ENCODE measurements at regions of chr6 and their contacts with region 1.

Region 1: DNA sequence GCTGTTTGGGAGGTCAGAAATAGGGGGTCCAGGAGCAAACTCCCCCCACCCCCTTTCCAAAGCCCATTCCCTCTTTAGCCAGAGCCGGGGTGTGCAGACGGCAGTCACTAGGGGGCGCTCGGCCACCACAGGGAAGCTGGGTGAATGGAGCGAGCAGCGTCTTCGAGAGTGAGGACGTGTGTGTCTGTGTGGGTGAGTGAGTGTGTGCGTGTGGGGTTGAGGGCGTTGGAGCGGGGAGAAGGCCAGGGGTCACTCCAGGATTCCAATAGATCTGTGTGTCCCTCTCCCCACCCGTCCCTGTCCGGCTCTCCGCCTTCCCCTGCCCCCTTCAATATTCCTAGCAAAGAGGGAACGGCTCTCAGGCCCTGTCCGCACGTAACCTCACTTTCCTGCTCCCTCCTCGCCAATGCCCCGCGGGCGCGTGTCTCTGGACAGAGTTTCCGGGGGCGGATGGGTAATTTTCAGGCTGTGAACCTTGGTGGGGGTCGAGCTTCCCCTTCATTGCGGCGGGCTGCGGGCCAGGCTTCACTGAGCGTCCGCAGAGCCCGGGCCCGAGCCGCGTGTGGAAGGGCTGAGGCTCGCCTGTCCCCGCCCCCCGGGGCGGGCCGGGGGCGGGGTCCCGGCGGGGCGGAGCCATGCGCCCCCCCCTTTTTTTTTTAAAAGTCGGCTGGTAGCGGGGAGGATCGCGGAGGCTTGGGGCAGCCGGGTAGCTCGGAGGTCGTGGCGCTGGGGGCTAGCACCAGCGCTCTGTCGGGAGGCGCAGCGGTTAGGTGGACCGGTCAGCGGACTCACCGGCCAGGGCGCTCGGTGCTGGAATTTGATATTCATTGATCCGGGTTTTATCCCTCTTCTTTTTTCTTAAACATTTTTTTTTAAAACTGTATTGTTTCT is at the start of gene VEGFA:
- DNase-seq: peak; percentile 98
- H3K4me3 ChIP-seq: peak within 1 kb of the TSS; percentile 94 to 95
- H3K27ac ChIP-seq: peak within 1 kb of the TSS; percentile 85 to 94
- H3K4me1 ChIP-seq: peaks cover 16 to 50% of the 10 kb centered on the region in 2 experiments
- H3K27me3 ChIP-seq: no peaks in the 10 kb centered on the region
- CTCF ChIP-seq: peak; percentile 99
- EP300 ChIP-seq: no peak; a peak in 1 of 4 replicates
- RAD21 ChIP-seq: peak; percentile 93
- polyA plus RNA-seq, gene VEGFA: 81.0 and 130 TPM in 2 replicates

Region 2: DNA sequence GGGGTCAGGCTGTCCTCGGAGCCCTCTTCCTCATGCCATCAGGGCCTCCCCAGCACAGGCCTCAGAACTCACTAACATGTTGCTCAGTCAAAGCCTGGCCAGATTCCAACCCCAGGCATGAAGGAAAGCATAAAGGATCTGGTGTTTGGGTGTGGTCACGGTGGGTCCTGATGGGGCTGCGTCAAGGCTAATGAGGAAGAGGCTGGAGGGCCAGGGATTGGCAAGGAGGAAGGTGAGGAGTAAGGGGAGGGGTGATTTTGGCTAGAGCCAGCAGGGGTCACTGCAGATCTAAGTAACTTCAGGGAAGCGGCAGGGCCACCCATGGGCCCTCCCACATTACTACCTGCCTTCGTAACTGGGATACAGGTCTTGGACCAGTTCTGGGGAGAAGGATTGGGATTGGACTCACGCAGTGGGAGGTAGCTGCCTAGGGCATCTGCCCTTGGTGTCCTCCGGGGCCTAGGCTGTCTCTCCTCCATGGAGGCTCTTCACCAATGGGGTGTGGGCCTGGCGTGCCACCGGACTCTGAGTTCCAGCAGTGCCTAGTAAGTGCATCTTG is 46.0 kb before region 1 on chr6:
- CTCF ChIA-PET with region 1: interaction called, 47 read pairs
- POLR2A ChIA-PET with region 1: interaction called, 3 read pairs
- DNase-seq: peak; percentile 77
- H3K4me3 ChIP-seq: no peak overlapping the region; a peak in 1 of 4 replicates
- H3K27ac ChIP-seq: no peak overlapping the region
- H3K4me1 ChIP-seq: peaks cover 0 to 13% of the 10 kb centered on the region in 2 experiments; a peak in 2 of 4 replicates
- H3K27me3 ChIP-seq: no peaks in the 10 kb centered on the region
- CTCF ChIP-seq: peak; percentile 62
- EP300 ChIP-seq: no peak
- RAD21 ChIP-seq: peak; percentile 83

Region 3: GRCh38 chr6:43781941-43782704 is 12.4 kb after region 1 on chr6:
- CTCF ChIA-PET with region 1: interaction called, 35 read pairs
- POLR2A ChIA-PET with region 1: interaction called, 6 read pairs
- DNase-seq: no peak
- H3K4me3 ChIP-seq: no peak overlapping the region
- H3K27ac ChIP-seq: no peak overlapping the region
- H3K4me1 ChIP-seq: peaks cover 0 to 53% of the 10 kb centered on the region in 2 experiments; a peak in 1 of 4 replicates
- H3K27me3 ChIP-seq: no peaks in the 10 kb centered on the region
- CTCF ChIP-seq: no peak
- EP300 ChIP-seq: no peak
- RAD21 ChIP-seq: no peak

Region 4: DNA sequence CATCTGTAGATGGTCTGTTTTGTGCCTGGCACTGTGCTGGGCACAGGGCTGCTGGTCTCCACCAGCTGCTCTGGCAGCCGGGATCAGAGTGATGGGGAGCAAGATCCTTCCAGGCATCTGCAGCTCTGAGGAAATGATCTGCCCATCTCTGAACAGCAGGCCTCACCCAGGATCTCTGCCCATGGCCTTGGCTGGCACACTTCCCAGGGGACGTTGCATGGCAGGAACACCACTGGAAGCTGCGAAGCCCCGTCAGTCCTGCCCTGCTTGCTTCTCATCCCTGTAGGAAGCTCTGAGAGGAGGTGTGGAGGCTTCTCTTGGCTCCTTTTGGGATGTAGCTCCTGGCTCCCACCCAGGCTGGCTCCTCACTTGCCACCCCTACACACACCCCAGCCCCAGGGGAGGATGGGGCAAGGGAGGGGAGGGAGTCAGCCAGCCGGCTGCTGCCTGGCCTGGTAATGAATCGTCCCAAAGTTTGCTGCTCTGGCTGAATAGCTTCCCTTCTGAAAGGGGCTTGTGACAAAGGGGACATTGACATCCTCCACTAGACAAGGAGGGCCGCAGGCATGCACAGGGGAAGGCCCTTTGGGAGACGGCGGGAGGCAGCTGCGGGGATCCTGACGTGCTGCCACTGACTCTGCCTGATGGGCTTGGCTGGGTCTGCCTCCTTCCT is 109.2 kb after region 1 on chr6:
- CTCF ChIA-PET with region 1: interaction called, 12 read pairs
- POLR2A ChIA-PET with region 1: interaction called, 6 read pairs
- DNase-seq: peak; percentile 80
- H3K4me3 ChIP-seq: no peak overlapping the region
- H3K27ac ChIP-seq: peak overlapping the region in 1 of 2 experiments; percentile 94; a peak in 2 of 4 replicates
- H3K4me1 ChIP-seq: peaks cover 0 to 63% of the 10 kb centered on the region in 2 experiments; a peak in 2 of 4 replicates
- H3K27me3 ChIP-seq: no peaks in the 10 kb centered on the region
- CTCF ChIP-seq: no peak
- EP300 ChIP-seq: peak in 1 of 2 experiments; percentile 53; a peak in 2 of 4 replicates
- RAD21 ChIP-seq: peak; percentile 26; the same call in 1 of the 2 replicates

Region 5: DNA sequence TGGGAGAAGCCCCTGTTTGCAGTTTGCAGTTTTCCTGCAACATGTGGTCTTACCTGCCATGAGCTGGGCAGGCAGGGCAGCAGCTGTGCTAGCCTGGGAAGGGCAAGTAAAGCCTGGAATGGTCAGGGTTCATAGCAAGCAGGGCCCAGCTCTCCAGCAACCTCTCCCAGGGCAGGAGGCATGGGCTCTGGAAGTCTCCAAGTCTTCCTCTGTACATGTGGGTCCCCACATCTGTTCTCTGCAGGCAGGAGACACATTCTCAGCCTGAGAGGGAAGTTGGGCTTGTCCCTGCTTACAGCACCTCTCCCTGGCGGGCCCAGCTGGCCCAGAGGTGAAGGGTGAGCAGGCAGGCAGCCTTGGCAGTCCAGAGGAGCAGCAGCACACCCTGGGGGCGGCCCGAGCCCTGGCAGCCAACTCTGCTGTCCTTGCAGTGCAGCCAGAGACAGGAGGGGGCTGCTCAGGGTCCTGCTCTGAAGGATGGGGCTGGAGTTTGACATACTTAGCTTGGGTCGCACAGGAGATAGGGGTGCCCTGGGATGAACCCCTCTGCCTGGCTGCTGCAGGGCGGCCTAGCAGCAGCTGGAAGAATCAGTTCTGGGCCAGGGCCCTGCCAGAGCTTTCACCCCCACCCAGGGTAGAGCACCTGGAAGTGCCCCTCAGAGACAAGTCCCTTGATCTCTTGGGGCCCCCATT is 181.4 kb after region 1 on chr6:
- CTCF ChIA-PET with region 1: interaction called, 140 read pairs
- POLR2A ChIA-PET with region 1: interaction called, 43 read pairs
- DNase-seq: peak; percentile 83
- H3K4me3 ChIP-seq: no peak overlapping the region
- H3K27ac ChIP-seq: peak overlapping the region in 1 of 2 experiments; percentile 87; a peak in 2 of 4 replicates
- H3K4me1 ChIP-seq: peaks cover 0 to 47% of the 10 kb centered on the region in 2 experiments; a peak in 1 of 4 replicates
- H3K27me3 ChIP-seq: no peaks in the 10 kb centered on the region
- CTCF ChIP-seq: peak; percentile 34
- EP300 ChIP-seq: no peak; a peak in 2 of 4 replicates
- RAD21 ChIP-seq: peak; percentile 89

Region 6: DNA sequence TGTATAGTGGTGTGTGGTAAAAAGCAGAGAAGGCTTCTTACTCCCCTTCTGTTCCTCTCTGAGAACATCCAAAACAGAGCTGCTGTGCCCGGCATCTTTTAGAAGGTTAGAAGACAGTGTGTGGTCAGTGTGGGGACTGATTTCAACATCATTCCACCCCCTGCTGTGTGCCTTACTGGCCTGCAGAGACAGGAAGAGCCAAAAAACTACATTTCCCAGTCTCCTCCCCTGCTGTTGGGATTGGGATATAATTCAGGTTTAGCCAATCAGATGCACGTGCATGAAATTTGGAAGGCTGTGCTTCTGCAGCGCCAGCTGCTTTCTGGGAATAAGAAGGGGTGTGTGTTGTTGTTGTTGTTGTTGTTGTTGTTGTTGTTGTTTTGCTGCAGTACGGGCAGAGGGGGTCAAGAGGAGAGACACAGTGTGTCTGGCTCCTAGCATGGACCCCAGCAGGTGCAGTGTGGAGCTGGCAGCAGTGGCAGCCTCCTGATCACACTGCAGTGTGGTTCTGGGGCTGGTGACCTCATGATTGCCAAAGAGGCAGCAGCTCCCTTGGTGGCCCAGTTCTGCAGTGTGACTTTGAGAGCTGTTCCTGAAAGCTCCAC is 282.8 kb after region 1 on chr6:
- CTCF ChIA-PET with region 1: interaction called, 32 read pairs
- POLR2A ChIA-PET with region 1: interaction called, 14 read pairs
- DNase-seq: peak; percentile 60
- H3K4me3 ChIP-seq: no peak overlapping the region
- H3K27ac ChIP-seq: peak overlapping the region; percentile 68 to 94; a peak in 3 of 4 replicates
- H3K4me1 ChIP-seq: peaks cover 66 to 99% of the 10 kb centered on the region in 2 experiments
- H3K27me3 ChIP-seq: no peaks in the 10 kb centered on the region
- CTCF ChIP-seq: no peak
- EP300 ChIP-seq: no peak
- RAD21 ChIP-seq: no peak

Region 7: GRCh38 chr6:44080561-44081521 is 311.1 kb after region 1 on chr6:
- CTCF ChIA-PET with region 1: interaction called, 212 read pairs
- POLR2A ChIA-PET with region 1: interaction called, 53 read pairs
- DNase-seq: no peak
- H3K4me3 ChIP-seq: no peak overlapping the region
- H3K27ac ChIP-seq: no peak overlapping the region; a peak in 1 of 4 replicates
- H3K4me1 ChIP-seq: peaks cover 0 to 75% of the 10 kb centered on the region in 2 experiments; a peak in 3 of 4 replicates
- H3K27me3 ChIP-seq: no peaks in the 10 kb centered on the region
- CTCF ChIP-seq: no peak
- EP300 ChIP-seq: no peak
- RAD21 ChIP-seq: no peak